Esophagus squamous epithelium (tissue), 5 donors: ENCODE measurements at regions of chr1 and their contacts with region 1.

Region 1: DNA sequence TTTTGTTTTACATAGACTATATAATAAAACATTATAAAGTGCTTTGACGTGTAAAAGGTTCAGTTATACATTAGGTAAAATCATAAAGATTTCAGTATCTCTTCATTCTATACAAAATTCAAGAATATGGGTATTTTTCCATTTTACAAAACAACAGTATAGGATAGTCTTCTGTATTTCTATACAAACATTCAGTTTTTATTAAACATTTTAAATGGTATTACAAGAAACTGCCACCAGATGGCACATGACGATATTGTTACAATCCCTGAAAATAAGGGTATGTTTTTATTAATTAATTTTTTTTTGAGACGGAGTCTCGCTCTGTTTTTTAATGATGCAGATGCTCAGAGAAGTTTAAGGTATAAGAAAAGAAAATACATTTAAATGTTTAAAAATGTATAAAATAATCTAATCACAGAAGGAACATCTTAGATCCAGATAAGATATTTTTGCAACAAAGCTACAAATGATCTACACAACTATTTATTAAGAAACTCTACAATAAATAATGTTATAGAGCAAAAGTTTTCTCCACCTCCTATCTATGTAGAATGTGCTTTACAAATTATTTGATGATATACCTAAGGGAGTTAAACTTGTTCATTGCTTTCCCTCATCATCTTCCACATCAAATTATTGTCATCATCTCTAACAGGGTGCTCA is 23.5 kb upstream of the RSBN1 start:
- DNase-seq: no peak
- H3K4me3 ChIP-seq: no peak overlapping the region
- H3K27ac ChIP-seq: no peak overlapping the region
- H3K4me1 ChIP-seq: no peaks in the 10 kb centered on the region
- H3K27me3 ChIP-seq: no peaks in the 10 kb centered on the region
- CTCF ChIP-seq: peak; percentile 35 to 70 (median 58)
- POLR2A ChIP-seq: no peak

Region 2: GRCh38 chr1:113429443-113430153 is 406.2 kb before region 1 on chr1:
- intact Hi-C with region 1: no loop called
- DNase-seq: no peak
- H3K4me3 ChIP-seq: no peak overlapping the region
- H3K27ac ChIP-seq: no peak overlapping the region
- H3K4me1 ChIP-seq: peaks cover 0 to 23% (median 0%) of the 10 kb centered on the region in 3 donors
- H3K27me3 ChIP-seq: no peaks in the 10 kb centered on the region
- CTCF ChIP-seq: no peak
- POLR2A ChIP-seq: no peak

Region 3: DNA sequence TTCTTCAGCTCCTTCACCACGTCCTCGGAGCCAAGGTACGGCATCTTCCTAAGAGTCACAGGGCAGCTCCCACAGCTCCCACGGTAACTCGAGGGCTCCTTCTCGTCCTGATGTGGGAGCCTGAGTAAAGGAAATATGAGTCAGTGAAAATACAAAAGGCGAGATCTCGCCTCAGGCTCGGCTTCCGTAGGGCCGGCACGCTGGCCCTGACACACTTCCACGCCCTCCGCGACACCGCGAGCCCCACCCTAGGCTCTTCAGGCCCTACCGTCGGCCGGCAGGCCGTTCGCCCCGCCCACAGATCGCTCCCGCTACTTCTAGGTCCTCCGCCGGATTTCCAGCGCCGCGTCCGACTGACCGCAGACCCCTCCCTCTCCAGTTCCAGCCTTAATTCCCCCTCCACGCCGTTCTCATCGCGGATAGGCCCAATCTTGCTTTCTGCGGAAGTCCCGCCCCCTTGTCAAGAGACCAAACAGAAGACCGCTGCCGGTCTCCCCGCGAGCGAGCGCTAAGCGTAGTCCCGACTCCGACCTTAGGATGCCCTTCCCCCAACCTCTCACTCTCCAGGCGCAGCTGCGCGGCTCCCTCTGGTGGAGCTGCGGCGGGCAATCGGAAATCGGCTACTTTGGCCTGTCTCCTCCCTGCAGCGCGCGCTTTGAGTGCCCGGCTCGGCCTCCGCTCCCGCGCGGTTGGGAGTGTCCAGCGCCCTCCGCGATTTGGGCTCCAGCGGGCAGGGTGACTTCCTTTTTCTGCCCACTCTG is 69.1 kb after region 1 on chr1 and contains the starts of genes AP4B1 and DCLRE1B:
- intact Hi-C with region 1: loop called (anchors 5 kb)
- DNase-seq: peak; percentile 95
- H3K4me3 ChIP-seq: peak within 1 kb of the TSS; percentile 63 to 89 (median 79)
- H3K27ac ChIP-seq: peak within 1 kb of the TSS; percentile 88 to 98 (median 96)
- H3K4me1 ChIP-seq: peaks cover 7 to 47% (median 20%) of the 10 kb centered on the region in 3 donors
- H3K27me3 ChIP-seq: no peaks in the 10 kb centered on the region
- CTCF ChIP-seq: peak; percentile 57 to 95 (median 89)
- POLR2A ChIP-seq: peak in 3 of 4 donors; percentile 55 to 76 (median 74)
- total RNA-seq, gene AP4B1: 8.2 to 15.3 (median 11.5) TPM
- total RNA-seq, gene DCLRE1B: 2.7 to 6.5 (median 4.7) TPM